Esophagus muscularis mucosa (tissue), 4 donors: ENCODE measurements at regions of chr2 and their contacts with region 1.

Region 1: GRCh38 chr2:216698895-216699294 is 3.5 kb upstream of the IGFBP5 start:
- DNase-seq: no peak
- H3K4me3 ChIP-seq: no peak overlapping the region
- H3K27ac ChIP-seq: peak overlapping the region; percentile 84 to 94 (median 88)
- H3K4me1 ChIP-seq: peaks cover 43 to 74% (median 71%) of the 10 kb centered on the region in 4 donors
- H3K27me3 ChIP-seq: peaks cover 0 to 6% (median 0%) of the 10 kb centered on the region in 4 donors
- CTCF ChIP-seq: peak; percentile 67 to 81 (median 68)
- EP300 ChIP-seq: no peak
- POLR2A ChIP-seq: no peak

Region 2: DNA sequence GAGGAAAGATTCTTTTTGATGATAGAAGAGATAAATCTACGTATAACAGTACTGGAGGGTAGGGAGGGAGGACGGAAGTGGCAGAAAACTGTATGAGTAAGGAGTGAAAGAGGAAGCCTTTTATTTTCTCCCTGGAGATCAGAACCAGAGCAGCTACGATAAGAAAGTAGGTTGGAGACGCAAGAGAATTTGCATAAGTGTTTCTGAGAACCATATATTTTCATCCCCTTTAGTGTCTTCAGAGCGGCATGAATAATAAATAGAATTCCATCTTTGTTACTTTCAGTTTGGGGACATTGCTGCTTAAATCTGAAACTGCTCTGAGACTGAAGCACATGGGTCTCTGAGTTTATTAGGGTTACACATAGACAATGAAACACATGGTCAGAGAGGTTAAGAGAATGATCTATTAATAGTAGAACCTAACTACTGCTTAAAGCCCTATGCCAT is 391.2 kb after region 1 on chr2:
- intact Hi-C with region 1: no loop called
- DNase-seq: peak; percentile 5
- H3K4me3 ChIP-seq: peak overlapping the region in 2 of 4 donors; percentile 15 to 33
- H3K27ac ChIP-seq: no peak overlapping the region
- H3K4me1 ChIP-seq: peaks cover 0 to 3% (median 0%) of the 10 kb centered on the region in 4 donors
- H3K27me3 ChIP-seq: no peaks in the 10 kb centered on the region
- CTCF ChIP-seq: no peak
- EP300 ChIP-seq: no peak
- POLR2A ChIP-seq: no peak

Region 3: DNA sequence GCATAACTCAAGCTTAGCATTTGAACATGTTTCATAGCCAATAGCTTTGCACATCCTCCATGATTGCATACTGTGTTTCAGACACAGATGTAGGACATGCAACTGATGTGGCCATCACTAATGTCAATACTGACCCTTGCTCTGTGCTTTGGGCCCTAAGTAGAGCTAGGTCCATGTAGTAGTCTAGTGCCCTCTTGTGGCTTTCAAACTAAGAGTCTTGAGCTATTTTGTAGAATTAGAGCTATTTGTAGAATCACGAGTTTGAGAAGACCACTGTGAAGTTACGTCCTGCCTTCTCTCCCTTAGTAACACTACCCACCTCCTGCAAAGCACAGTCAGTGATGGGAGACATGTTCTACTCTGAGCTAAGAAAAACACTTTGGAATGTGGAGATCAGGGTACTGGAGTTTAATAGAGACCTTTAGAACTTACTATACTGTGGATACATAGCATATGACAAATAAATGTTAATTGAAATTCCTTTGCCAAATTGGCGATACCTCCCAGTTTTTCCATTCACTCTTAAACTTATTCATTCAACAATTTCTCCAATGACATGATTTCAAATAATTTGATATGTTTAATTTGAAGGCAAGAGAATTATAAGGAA is 467.5 kb after region 1 on chr2:
- intact Hi-C with region 1: loop called (anchors 5 kb)
- DNase-seq: peak; percentile 26
- H3K4me3 ChIP-seq: no peak overlapping the region
- H3K27ac ChIP-seq: no peak overlapping the region
- H3K4me1 ChIP-seq: peaks cover 0 to 13% (median 9%) of the 10 kb centered on the region in 4 donors
- H3K27me3 ChIP-seq: no peaks in the 10 kb centered on the region
- CTCF ChIP-seq: peak; percentile 40 to 61 (median 51)
- EP300 ChIP-seq: no peak
- POLR2A ChIP-seq: no peak

Region 4: GRCh38 chr2:217250013-217250524 is 551.2 kb after region 1 on chr2:
- intact Hi-C with region 1: loop called (anchors 10 kb)
- DNase-seq: no peak
- H3K4me3 ChIP-seq: no peak overlapping the region
- H3K27ac ChIP-seq: peak overlapping the region; percentile 82 to 83 (median 82)
- H3K4me1 ChIP-seq: peaks cover 18 to 61% (median 52%) of the 10 kb centered on the region in 4 donors
- H3K27me3 ChIP-seq: no peaks in the 10 kb centered on the region
- CTCF ChIP-seq: no peak
- EP300 ChIP-seq: peak; percentile 92
- POLR2A ChIP-seq: no peak

Region 5: GRCh38 chr2:217643789-217644301 is 945.0 kb after region 1 on chr2:
- intact Hi-C with region 1: loop called (anchors 10 kb)
- DNase-seq: no peak
- H3K4me3 ChIP-seq: no peak overlapping the region
- H3K27ac ChIP-seq: peak overlapping the region; percentile 13 to 55 (median 42)
- H3K4me1 ChIP-seq: peaks cover 5 to 35% (median 34%) of the 10 kb centered on the region in 4 donors
- H3K27me3 ChIP-seq: no peaks in the 10 kb centered on the region
- CTCF ChIP-seq: no peak
- EP300 ChIP-seq: no peak
- POLR2A ChIP-seq: no peak